ENCODE measurements at regions of chr6 and their contacts with region 1.

Region 1: GRCh38 chr6:32439602-32440214 is at the start of gene HLA-DRA:
- DNase-seq: peak; percentile 90 to 94 (median 91)
- H3K4me3 ChIP-seq: peak within 1 kb of the TSS; percentile 70 to 100 (median 94)
- H3K27ac ChIP-seq: peak within 1 kb of the TSS; percentile 95 to 97
- H3K4me1 ChIP-seq: peaks cover 14 to 51% (median 26%) of the 10 kb centered on the region in 4 experiments
- H3K27me3 ChIP-seq: no peaks in the 10 kb centered on the region

Region 2: DNA sequence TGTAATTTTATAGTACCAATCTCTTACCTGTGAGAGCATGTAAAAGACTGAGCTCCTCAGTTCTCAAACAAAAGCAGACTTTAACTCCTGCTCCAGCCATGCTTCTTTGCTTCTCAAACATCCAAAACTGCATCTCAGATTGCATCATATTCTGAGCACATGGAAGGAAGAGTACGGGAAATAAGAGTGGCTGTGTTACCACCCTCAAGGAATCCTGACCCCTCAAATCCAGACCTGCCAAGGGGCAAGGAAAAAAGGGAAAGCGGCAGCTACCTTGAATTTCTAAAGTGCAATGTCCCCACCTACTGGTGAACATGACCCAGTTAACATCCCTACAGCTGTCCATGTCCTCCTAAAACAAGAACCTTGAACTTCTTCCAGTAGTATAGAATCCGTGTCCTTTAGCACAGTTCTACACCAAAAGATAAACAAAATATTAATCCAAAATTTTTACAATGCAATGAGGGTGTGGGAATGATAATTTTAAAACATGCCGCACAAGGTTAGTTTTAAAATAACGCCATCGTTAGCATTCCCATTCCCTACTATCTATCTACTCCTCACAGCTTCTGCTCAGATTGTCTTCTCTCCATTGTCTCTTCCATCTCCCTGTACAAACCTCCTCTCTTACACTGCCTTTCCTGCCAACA is 260.8 kb after region 1 on chr6:
- CTCF ChIA-PET with region 1: interaction called, 10 read pairs
- POLR2A ChIA-PET with region 1: no interaction called
- DNase-seq: peak; percentile 51 to 63 (median 60)
- H3K4me3 ChIP-seq: peak overlapping the region in 3 of 7 experiments; percentile 23 to 53 (median 36)
- H3K27ac ChIP-seq: no peak overlapping the region
- H3K4me1 ChIP-seq: peaks cover 0 to 4% (median 2%) of the 10 kb centered on the region in 4 experiments
- H3K27me3 ChIP-seq: peaks cover 0 to 6% (median 0%) of the 10 kb centered on the region in 5 experiments

Measured in common myeloid progenitor, CD34-positive (primary cell).